Right lobe of liver (tissue), 6 donors: ENCODE measurements at regions of chr17 and their contacts with region 1.

Region 1: DNA sequence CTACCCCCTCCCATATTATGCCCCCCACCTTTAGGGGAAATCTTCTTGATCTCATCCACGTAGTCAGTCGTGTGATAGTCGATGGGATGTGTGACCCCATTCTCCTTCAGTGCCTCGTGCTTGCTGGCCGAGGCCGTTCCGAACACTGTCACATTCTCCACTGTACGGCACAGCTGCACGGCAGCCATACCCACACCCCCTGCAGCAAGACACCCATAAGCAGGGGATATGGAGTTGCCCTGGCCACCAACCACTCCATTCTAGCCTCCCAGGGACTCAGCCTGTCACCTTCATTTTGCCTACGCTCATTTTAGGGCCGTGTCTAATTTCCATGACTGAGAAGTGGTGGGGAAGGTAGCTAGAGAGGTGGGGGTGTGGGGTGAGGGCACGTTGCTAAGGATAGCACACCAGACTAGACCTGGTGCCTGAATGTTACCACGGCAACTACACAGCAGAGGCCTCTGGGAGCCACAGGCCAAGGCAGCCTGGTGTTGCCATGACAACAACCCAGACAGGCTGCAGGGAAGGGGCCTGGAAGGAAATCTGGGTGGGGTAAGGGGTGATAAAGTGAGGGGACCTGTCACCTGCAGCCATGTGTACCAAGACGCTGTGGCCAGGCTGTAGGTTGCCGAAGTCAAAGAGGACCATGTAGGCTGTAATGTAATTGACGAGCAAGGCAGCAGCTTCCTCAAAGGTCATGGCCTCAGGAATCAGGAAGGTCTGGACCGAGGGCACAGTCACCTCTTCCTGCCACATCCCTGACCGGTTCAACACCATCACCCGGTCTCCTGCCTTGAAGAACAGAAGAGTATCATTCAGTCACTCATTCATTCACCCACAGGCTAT is 4.0 kb downstream of the VAT1 start:
- DNase-seq: peak in 1 of 3 donors; percentile 44
- ATAC-seq: no peak
- H3K4me3 ChIP-seq: no peak overlapping the region
- H3K27ac ChIP-seq: no peak overlapping the region
- H3K4me1 ChIP-seq: no peaks in the 10 kb centered on the region
- H3K27me3 ChIP-seq: no peaks in the 10 kb centered on the region
- CTCF ChIP-seq: no peak
- POLR2A ChIP-seq: no peak

Region 2: GRCh38 chr17:43224146-43224695 is 206.0 kb after region 1 on chr17:
- intact Hi-C with region 1: loop called in 1 of 2 experiments (anchors 10 kb)
- DNase-seq: no peak
- ATAC-seq: no peak
- H3K4me3 ChIP-seq: no peak overlapping the region
- H3K27ac ChIP-seq: no peak overlapping the region
- H3K4me1 ChIP-seq: no peaks in the 10 kb centered on the region
- H3K27me3 ChIP-seq: no peaks in the 10 kb centered on the region
- CTCF ChIP-seq: no peak
- POLR2A ChIP-seq: no peak